Common myeloid progenitor, CD34-positive (primary cell): ENCODE measurements at regions of chr2 and their contacts with region 1.

Region 1: DNA sequence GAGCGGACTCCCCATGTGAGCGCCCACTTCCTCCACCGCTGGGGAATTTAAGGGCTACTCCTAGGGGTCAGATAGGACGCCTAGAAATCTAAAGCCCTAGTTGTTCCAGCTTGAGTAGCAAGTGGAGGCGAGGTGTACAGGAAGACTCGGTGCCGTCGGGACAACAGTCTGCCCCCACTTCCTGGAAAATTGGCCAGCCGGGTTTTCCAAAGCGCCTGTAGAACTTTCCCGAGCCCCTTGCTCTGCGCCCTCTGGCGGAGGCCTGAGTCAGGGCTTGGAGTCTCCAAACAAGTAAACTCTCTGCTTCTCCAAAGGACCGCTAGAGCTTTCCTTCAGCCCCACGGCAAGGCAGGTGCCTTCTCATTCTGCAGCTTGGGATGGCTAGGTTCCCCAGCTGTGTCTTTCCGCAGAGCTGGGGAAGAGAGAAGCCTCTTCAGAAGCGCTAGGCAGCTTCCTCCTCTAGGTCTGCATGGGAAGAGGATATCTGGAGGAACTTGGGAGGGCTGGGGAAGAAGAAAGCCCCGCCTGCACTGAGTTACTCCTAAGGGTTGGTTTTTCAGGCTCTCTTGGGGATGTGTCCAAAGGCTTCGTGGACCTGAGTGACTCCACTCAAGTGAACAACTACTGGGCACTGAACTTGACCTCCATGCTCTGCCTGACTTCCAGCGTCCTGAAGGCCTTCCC is 688 bp downstream of the SPR start:
- DNase-seq: peak; percentile 50 to 73 (median 69)
- H3K4me3 ChIP-seq: peak overlapping the region; percentile 31 to 75 (median 64)
- H3K27ac ChIP-seq: no peak overlapping the region
- H3K4me1 ChIP-seq: peaks cover 0 to 17% (median 16%) of the 10 kb centered on the region in 4 experiments
- H3K27me3 ChIP-seq: peaks cover 11 to 44% (median 27%) of the 10 kb centered on the region in 5 experiments

Region 2: GRCh38 chr2:72678024-72678423 is 209.9 kb before region 1 on chr2:
- CTCF ChIA-PET with region 1: no interaction called
- POLR2A ChIA-PET with region 1: no interaction called
- DNase-seq: no peak
- H3K4me3 ChIP-seq: no peak overlapping the region
- H3K27ac ChIP-seq: no peak overlapping the region
- H3K4me1 ChIP-seq: no peaks in the 10 kb centered on the region
- H3K27me3 ChIP-seq: no peaks in the 10 kb centered on the region

Region 3: DNA sequence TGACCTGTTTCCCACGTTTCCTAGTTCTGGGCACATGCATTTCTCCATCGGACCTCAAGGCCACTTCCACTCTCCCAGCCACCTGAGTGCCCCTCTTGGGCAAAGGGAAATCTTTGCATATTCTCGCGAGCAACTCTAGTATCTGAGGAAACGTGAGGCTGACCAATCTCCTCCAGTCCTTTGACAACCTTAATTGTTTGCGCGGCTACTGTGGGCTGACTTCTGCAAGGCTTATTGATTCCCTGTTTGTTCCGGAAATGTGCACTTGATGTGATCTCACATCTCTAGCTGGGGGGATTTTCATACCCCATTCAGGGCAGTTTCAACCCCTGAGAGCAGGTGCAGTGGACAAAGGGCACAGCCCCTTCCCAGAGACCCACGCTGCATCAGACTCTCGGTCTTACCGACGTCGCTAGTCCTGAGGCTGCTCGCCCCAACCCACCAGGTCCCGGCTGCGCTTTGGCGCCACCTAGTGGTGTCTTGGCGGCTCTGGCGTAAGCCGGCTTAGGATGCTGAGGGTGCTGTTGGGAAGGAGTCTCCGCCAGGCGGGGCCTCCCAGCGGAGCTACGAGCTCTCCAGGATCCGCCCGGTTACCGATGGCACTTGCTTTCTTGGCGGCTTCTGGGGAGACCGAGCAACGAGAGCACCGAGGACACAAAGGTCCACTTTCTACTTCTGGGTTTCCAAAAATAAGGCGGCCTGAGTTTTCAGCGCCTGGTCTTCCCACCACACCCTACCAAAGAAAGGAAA is 25.5 kb before region 1 on chr2:
- CTCF ChIA-PET with region 1: interaction called, 17 read pairs
- POLR2A ChIA-PET with region 1: no interaction called
- DNase-seq: peak; percentile 85 to 89 (median 87)
- H3K4me3 ChIP-seq: peak overlapping the region in 3 of 7 experiments; percentile 38 to 57 (median 40)
- H3K27ac ChIP-seq: no peak overlapping the region
- H3K4me1 ChIP-seq: peaks cover 0 to 10% (median 8%) of the 10 kb centered on the region in 4 experiments
- H3K27me3 ChIP-seq: peaks cover 0 to 40% (median 16%) of the 10 kb centered on the region in 5 experiments

Region 4: DNA sequence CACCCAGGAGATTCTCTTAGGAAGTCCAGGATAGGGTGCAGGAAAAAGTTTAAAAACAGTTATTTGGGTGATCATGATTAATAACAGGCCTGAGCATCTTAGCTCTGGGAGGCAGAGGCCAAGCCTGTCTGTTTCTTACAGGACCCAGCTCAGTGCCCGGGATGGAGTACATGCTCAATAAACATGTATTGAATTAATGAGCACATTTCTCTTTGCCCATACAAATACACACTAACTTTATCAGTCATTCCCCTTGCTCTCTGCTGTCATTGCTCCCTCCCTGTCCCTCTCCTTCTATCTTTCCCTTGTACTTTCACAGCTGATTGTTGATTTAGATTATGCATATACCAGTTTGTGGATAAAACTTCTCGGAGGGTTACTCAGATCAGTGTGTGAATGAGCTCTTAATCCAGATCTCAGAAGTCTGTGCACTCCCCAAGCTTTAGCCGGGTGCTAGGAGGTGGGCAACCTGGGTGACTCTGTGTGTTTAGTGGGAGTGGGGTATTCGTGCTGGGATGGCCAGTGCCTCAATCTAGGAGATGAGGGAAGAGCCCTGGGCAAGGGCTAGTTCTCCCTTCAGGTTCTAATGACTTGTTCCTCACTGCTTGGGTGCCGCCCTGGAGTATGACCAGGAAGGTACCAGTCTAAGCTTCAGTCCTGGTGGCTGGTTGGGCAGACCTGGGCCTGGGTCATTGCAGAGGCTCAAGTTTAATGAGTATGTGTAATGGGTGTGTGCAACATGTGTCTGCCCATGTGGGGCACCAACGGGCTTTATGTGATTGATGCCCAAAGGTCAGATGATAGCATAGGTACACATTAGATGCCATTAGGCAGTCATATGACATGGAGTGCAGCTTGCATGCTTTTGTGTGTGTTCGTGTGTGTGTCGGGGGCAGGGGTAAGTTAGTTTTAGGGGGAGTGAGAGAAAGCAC is 40.0 kb after region 1 on chr2:
- CTCF ChIA-PET with region 1: interaction called, 20 read pairs
- POLR2A ChIA-PET with region 1: no interaction called
- DNase-seq: no peak
- H3K4me3 ChIP-seq: no peak overlapping the region
- H3K27ac ChIP-seq: no peak overlapping the region
- H3K4me1 ChIP-seq: peaks cover 0 to 17% (median 14%) of the 10 kb centered on the region in 4 experiments
- H3K27me3 ChIP-seq: peaks cover 23 to 97% (median 55%) of the 10 kb centered on the region in 5 experiments

Region 5: GRCh38 chr2:72973566-72974435 is 85.9 kb after region 1 on chr2:
- CTCF ChIA-PET with region 1: interaction called, 86 read pairs
- POLR2A ChIA-PET with region 1: no interaction called
- DNase-seq: peak; percentile 34 to 69 (median 56)
- H3K4me3 ChIP-seq: no peak overlapping the region
- H3K27ac ChIP-seq: no peak overlapping the region
- H3K4me1 ChIP-seq: no peaks in the 10 kb centered on the region
- H3K27me3 ChIP-seq: peaks cover 0 to 4% (median 0%) of the 10 kb centered on the region in 5 experiments

Region 6: DNA sequence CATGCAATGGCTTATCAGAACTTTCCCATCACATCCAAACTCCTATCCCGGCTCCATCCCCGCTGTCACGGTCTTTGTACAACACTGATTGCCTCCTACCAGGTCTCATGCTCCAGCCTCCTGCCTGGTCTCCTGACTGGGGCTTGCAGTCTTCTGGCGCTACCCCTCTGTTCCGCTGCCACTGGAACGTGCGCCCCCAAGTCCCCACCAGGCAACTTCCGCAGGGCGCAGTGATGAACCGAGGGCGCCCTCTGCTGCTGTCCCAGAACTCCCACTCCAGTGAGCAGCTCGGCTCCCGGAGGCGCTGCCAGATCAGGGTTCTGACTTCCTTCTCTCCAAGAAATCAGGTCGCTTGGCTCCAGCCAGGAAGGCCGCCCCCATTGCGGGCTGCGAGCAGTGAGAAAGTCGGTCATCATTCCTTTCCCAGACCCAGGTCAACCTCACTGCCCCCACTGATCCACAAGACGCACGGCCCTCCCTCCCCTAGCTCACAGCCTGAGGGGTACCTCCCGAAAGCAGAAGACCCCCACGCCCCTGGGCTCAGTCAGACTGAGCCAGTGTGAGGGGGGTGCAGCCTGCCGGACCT is 268.7 kb after region 1 on chr2:
- CTCF ChIA-PET with region 1: interaction called, 21 read pairs
- POLR2A ChIA-PET with region 1: no interaction called
- DNase-seq: peak; percentile 62 to 76 (median 76)
- H3K4me3 ChIP-seq: peak overlapping the region in 1 of 7 experiments; percentile 48
- H3K27ac ChIP-seq: no peak overlapping the region
- H3K4me1 ChIP-seq: peaks cover 0 to 7% (median 2%) of the 10 kb centered on the region in 4 experiments
- H3K27me3 ChIP-seq: peaks cover 2 to 10% (median 8%) of the 10 kb centered on the region in 5 experiments

Region 7: DNA sequence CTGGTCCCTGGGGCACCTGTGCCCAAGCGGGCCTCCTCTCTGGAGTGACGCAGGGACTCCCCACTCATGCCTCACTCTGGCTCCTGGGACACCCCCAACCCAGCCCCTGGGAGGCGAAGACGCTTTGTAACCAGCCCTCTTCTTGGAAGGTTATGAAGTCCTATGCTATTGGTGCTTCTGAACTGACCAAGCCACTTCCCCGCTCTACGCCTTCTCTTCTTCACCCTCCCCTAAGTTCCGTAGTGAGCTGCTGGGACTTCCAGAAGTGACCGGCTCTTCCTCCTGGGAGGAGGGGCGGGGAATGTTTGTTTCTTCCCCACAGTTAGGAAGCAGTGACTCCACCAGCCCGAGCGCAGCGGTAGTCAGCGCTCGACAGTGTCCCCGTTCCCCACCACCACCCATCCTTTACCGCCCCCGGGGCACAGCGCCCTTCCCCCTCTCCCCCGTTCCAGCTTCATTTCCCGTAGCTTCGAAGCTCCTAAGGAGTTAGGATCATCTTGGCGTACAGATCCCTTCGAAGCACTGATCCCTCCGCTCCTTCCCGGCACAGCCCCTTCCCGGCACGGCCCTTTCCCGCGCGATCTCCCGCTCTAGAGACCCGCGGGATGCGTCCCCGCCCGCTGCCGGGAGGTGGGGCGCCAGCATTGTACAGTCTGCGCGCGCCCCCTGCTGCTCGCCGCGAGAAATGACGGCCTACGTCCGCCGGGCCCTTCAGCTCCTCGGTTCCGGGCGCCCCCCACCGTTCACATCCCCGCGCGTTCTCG is 289.2 kb after region 1 on chr2:
- CTCF ChIA-PET with region 1: interaction called, 41 read pairs
- POLR2A ChIA-PET with region 1: no interaction called
- DNase-seq: peak; percentile 82 to 87 (median 85)
- H3K4me3 ChIP-seq: peak overlapping the region; percentile 27 to 80 (median 59)
- H3K27ac ChIP-seq: no peak overlapping the region
- H3K4me1 ChIP-seq: peaks cover 0 to 32% (median 26%) of the 10 kb centered on the region in 4 experiments
- H3K27me3 ChIP-seq: peaks cover 0 to 37% (median 12%) of the 10 kb centered on the region in 5 experiments